ENCODE measurements at regions of chr11 and their contacts with region 1.

Region 1: DNA sequence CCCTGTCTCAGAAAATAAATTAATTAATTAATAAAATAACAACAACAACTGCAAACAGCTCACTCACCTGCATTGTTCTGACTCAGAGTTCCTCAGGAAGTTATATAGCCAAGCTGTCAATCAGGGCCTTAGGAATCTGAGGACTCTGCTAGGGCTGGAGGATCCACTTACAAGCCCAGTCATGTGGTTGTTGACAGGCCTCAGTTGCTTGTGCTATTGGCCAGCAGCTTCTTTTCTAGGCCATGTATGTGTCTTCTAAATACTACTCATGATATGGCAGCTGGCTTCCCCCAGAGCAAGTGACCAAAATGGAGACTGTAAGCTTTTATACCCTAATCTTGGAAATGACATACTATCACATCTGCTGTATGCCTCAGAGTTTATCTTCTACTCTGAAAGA is 20.8 kb upstream of the ATP5MG start:
- DNase-seq: no peak
- ATAC-seq: no peak
- H3K4me3 ChIP-seq: no peak overlapping the region
- H3K27ac ChIP-seq: no peak overlapping the region
- H3K4me1 ChIP-seq: no peaks in the 10 kb centered on the region
- H3K27me3 ChIP-seq: no peaks in the 10 kb centered on the region
- CTCF ChIP-seq: no peak

Region 2: GRCh38 chr11:118319337-118319707 is 61.2 kb before region 1 on chr11:
- intact Hi-C with region 1: no loop called
- DNase-seq: no peak
- ATAC-seq: peak; percentile 64
- H3K4me3 ChIP-seq: no peak overlapping the region
- H3K27ac ChIP-seq: peak overlapping the region; percentile 63
- H3K4me1 ChIP-seq: peaks cover 35% of the 10 kb centered on the region
- H3K27me3 ChIP-seq: no peaks in the 10 kb centered on the region
- CTCF ChIP-seq: no peak

Region 3: GRCh38 chr11:118497831-118498230 is 117.3 kb after region 1 on chr11:
- intact Hi-C with region 1: loop called (anchors 10 kb)
- DNase-seq: no peak
- ATAC-seq: no peak
- H3K4me3 ChIP-seq: no peak overlapping the region
- H3K27ac ChIP-seq: no peak overlapping the region
- H3K4me1 ChIP-seq: no peaks in the 10 kb centered on the region
- H3K27me3 ChIP-seq: no peaks in the 10 kb centered on the region
- CTCF ChIP-seq: no peak